PC-3 (cell line): ENCODE measurements at regions of chr1 and their contacts with region 1.

Region 1: GRCh38 chr1:230459463-230459862 is 33.3 kb upstream of the PGBD5 start:
- DNase-seq: peak; percentile 65
- ATAC-seq: no peak
- H3K4me3 ChIP-seq: no peak overlapping the region
- H3K27ac ChIP-seq: peak overlapping the region; percentile 60
- H3K4me1 ChIP-seq: peaks cover 19% of the 10 kb centered on the region
- H3K27me3 ChIP-seq: peaks cover 60% of the 10 kb centered on the region
- CTCF ChIP-seq: no peak

Region 2: GRCh38 chr1:229862017-229862774 is 597.3 kb before region 1 on chr1:
- CTCF ChIA-PET with region 1: no interaction called
- POLR2A ChIA-PET with region 1: interaction called, 19 read pairs
- intact Hi-C with region 1: no loop called
- DNase-seq: no peak
- ATAC-seq: no peak
- H3K4me3 ChIP-seq: no peak overlapping the region
- H3K27ac ChIP-seq: no peak overlapping the region
- H3K4me1 ChIP-seq: no peaks in the 10 kb centered on the region
- H3K27me3 ChIP-seq: peaks cover 59% of the 10 kb centered on the region
- CTCF ChIP-seq: no peak

Region 3: GRCh38 chr1:230401763-230402294 is 57.6 kb before region 1 on chr1:
- CTCF ChIA-PET with region 1: no interaction called
- POLR2A ChIA-PET with region 1: no interaction called
- intact Hi-C with region 1: no loop called
- DNase-seq: no peak
- ATAC-seq: no peak
- H3K4me3 ChIP-seq: no peak overlapping the region
- H3K27ac ChIP-seq: no peak overlapping the region
- H3K4me1 ChIP-seq: no peaks in the 10 kb centered on the region
- H3K27me3 ChIP-seq: peaks cover 42% of the 10 kb centered on the region
- CTCF ChIP-seq: no peak

Region 4: GRCh38 chr1:230517786-230518185 is 58.3 kb after region 1 on chr1:
- CTCF ChIA-PET with region 1: interaction called, 11 read pairs
- POLR2A ChIA-PET with region 1: no interaction called
- intact Hi-C with region 1: no loop called
- DNase-seq: peak; percentile 55
- ATAC-seq: no peak
- H3K4me3 ChIP-seq: no peak overlapping the region
- H3K27ac ChIP-seq: no peak overlapping the region
- H3K4me1 ChIP-seq: no peaks in the 10 kb centered on the region
- H3K27me3 ChIP-seq: peaks cover 81% of the 10 kb centered on the region
- CTCF ChIP-seq: no peak

Region 5: GRCh38 chr1:231252341-231252740 is 792.9 kb after region 1 on chr1:
- CTCF ChIA-PET with region 1: no interaction called
- POLR2A ChIA-PET with region 1: no interaction called
- intact Hi-C with region 1: no loop called
- DNase-seq: peak; percentile 22
- ATAC-seq: no peak
- H3K4me3 ChIP-seq: no peak overlapping the region
- H3K27ac ChIP-seq: no peak overlapping the region
- H3K4me1 ChIP-seq: peaks cover 9% of the 10 kb centered on the region
- H3K27me3 ChIP-seq: no peaks in the 10 kb centered on the region
- CTCF ChIP-seq: no peak